Kidney (tissue), 22 donors: ENCODE measurements at regions of chr11 and their contacts with region 1.

Region 1: GRCh38 chr11:100575870-100576705 is 111.0 kb upstream of the ARHGAP42 start:
- DNase-seq: peak in 3 of 5 donors; percentile 14 to 83 (median 66)
- H3K4me3 ChIP-seq: no peak overlapping the region
- H3K27ac ChIP-seq: no peak overlapping the region
- H3K4me1 ChIP-seq: peaks cover 0 to 7% (median 0%) of the 10 kb centered on the region in 3 donors
- H3K27me3 ChIP-seq: no peaks in the 10 kb centered on the region
- CTCF ChIP-seq: peak; percentile 84

Region 2: GRCh38 chr11:100930185-100930778 is 354.2 kb after region 1 on chr11:
- intact Hi-C with region 1: loop called (anchors 10 kb)
- DNase-seq: peak in 2 of 5 donors; percentile 80 to 83
- H3K4me3 ChIP-seq: no peak overlapping the region
- H3K27ac ChIP-seq: no peak overlapping the region
- H3K4me1 ChIP-seq: no peaks in the 10 kb centered on the region
- H3K27me3 ChIP-seq: no peaks in the 10 kb centered on the region
- CTCF ChIP-seq: peak; percentile 63